ENCODE measurements at regions of chr3 and their contacts with region 1.

Region 1: DNA sequence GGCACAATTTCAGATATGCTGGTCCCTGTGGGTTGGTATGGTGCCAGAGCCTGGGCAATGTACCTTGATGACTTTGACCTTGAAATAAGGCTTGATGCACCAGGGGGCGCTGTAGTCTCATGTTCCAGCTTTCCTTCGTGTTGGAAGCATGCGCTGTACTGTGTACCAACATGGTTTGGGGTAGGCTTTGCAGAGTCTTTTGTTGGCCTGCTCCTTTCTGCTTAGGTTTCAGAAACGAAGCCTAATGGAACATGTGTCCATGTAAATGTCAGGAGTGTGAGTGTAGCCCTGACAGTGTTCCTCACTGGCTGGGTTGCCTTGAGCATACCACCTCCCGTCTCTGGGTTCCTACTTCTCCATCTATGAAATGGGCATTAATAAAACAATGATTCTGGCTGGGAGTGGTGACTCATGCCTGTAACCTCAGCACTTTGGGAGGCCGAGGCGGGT is 3.6 kb upstream of the CCR4 start:
- DNase-seq: peak; percentile 82 to 89 (median 85)
- H3K4me3 ChIP-seq: no peak overlapping the region
- H3K4me3 Mint-ChIP-seq: peak overlapping the region in 2 of 8 donors; percentile 7 to 52
- H3K27ac ChIP-seq: no peak overlapping the region
- H3K27ac Mint-ChIP-seq: peak overlapping the region in 6 of 7 donors; percentile 5 to 91 (median 62)
- H3K4me1 ChIP-seq: peaks cover 42% of the 10 kb centered on the region
- H3K4me1 Mint-ChIP-seq: peaks cover 20 to 52% (median 37%) of the 10 kb centered on the region in 4 donors
- H3K27me3 ChIP-seq: no peaks in the 10 kb centered on the region
- H3K27me3 Mint-ChIP-seq: no peaks in the 10 kb centered on the region

Region 2: DNA sequence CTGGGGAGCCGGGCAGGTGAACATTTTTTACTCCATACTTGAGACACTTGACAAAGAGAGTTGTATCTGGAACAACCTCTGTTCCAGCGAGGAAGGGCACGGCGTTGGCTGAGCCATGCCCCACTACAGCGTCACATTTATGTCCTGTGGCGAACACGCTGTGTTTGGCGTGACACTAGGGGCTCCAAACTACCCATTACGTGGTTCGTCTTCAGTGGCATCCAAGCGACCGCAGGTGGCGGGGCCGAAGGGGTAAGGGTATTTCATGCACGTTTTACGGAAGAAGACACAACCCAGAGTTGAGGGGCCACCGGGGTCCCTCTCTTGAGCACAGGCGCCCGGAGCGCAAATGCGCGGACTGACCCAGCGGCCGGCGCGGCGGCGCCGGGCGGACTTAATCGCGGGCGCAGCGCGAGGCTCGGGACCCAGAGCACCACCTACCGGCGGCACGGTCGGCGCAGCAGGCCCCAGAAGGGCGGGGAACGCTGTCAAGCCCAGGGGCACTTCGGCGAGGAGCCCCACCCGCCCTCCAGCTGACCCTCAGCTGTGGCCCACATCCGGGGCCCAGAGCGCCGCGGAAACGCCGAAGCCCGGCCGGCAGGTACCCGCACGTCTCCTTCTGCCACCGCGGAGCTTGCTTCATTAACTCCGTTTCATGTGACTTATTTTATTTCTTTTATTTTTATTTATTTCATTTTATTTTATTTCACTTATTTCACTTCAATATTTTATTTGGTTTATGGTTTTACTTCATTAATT is 166.4 kb before region 1 on chr3:
- CTCF ChIA-PET with region 1: no interaction called
- POLR2A ChIA-PET with region 1: no interaction called
- intact Hi-C with region 1: no loop called
- DNase-seq: peak; percentile 35 to 52 (median 42)
- H3K4me3 ChIP-seq: peak overlapping the region; percentile 60 to 84
- H3K4me3 Mint-ChIP-seq: peak overlapping the region; percentile 87 to 95 (median 90)
- H3K27ac ChIP-seq: no peak overlapping the region
- H3K27ac Mint-ChIP-seq: peak overlapping the region in 3 of 7 donors; percentile 42 to 63 (median 59)
- H3K4me1 ChIP-seq: peaks cover 6% of the 10 kb centered on the region
- H3K4me1 Mint-ChIP-seq: peaks cover 2 to 13% (median 4%) of the 10 kb centered on the region in 4 donors
- H3K27me3 ChIP-seq: peaks cover 3% of the 10 kb centered on the region
- H3K27me3 Mint-ChIP-seq: peaks cover 3 to 4% of the 10 kb centered on the region in 2 donors

Region 3: DNA sequence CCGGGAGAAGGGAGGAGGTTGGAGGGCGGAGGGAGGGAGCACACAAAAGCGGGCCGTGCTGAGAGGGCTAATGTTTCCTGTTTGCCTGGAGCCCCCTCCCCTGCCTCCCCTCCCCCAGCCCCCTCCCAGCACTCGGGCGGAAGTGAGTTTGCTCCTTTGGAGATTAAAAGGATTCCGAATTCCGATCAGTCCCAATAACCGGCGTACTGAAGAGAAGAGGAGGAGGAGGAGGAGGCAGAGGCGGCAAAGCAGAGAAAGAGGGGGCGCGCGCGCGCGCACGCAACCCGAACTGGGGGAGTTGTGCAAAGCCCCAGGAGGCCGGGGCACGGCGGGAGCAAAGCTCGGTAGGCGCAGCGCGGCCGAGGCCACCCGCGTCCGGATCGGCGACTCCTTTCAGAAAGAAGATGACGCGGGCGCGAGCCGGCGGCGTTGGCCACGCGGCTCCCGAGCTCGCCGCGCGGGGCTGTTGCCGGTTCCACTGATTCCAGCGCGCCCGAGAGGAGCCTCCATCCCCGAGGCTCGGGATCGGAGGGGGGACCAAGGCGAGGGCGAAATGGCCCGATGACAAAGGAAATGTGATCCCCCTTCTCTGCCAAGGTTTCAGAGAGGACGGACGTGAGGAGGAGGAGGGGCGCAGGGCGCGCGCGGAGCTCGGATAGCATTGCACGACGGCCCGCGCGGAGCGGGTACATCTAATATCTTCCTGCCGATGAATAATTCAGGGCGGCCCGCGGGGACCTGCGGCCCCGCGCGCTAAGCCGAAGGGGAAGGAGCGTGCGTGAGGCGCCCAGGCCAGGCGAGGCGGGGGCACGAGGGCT is 131.2 kb before region 1 on chr3:
- CTCF ChIA-PET with region 1: no interaction called
- POLR2A ChIA-PET with region 1: no interaction called
- intact Hi-C with region 1: no loop called
- DNase-seq: peak in 1 of 5 donors; percentile 9
- H3K4me3 ChIP-seq: peak overlapping the region in 1 of 2 donors; percentile 19
- H3K4me3 Mint-ChIP-seq: peak overlapping the region; percentile 51 to 80 (median 64)
- H3K27ac ChIP-seq: no peak overlapping the region
- H3K27ac Mint-ChIP-seq: no peak overlapping the region
- H3K4me1 ChIP-seq: peaks cover 5% of the 10 kb centered on the region
- H3K4me1 Mint-ChIP-seq: peaks cover 6 to 30% (median 22%) of the 10 kb centered on the region in 4 donors
- H3K27me3 ChIP-seq: no peaks in the 10 kb centered on the region
- H3K27me3 Mint-ChIP-seq: peaks cover 26 to 33% of the 10 kb centered on the region in 2 donors

Region 4: GRCh38 chr3:32856355-32856889 is 91.4 kb before region 1 on chr3:
- CTCF ChIA-PET with region 1: no interaction called
- POLR2A ChIA-PET with region 1: no interaction called
- intact Hi-C with region 1: no loop called
- DNase-seq: no peak
- H3K4me3 ChIP-seq: no peak overlapping the region
- H3K4me3 Mint-ChIP-seq: no peak overlapping the region
- H3K27ac ChIP-seq: no peak overlapping the region
- H3K27ac Mint-ChIP-seq: no peak overlapping the region
- H3K4me1 ChIP-seq: no peaks in the 10 kb centered on the region
- H3K4me1 Mint-ChIP-seq: no peaks in the 10 kb centered on the region
- H3K27me3 ChIP-seq: no peaks in the 10 kb centered on the region
- H3K27me3 Mint-ChIP-seq: peaks cover 3 to 8% of the 10 kb centered on the region in 2 donors

Region 5: GRCh38 chr3:32960404-32961170 is 12.8 kb after region 1 on chr3:
- CTCF ChIA-PET with region 1: interaction called, 15 read pairs
- POLR2A ChIA-PET with region 1: interaction called, 5 read pairs
- intact Hi-C with region 1: loop called (anchors 1 kb)
- DNase-seq: peak; percentile 45 to 66 (median 55)
- H3K4me3 ChIP-seq: no peak overlapping the region
- H3K4me3 Mint-ChIP-seq: peak overlapping the region in 7 of 8 donors; percentile 18 to 75 (median 64)
- H3K27ac ChIP-seq: peak overlapping the region; percentile 31
- H3K27ac Mint-ChIP-seq: peak overlapping the region; percentile 63 to 99 (median 92)
- H3K4me1 ChIP-seq: peaks cover 71% of the 10 kb centered on the region
- H3K4me1 Mint-ChIP-seq: peaks cover 35 to 66% (median 56%) of the 10 kb centered on the region in 4 donors
- H3K27me3 ChIP-seq: no peaks in the 10 kb centered on the region
- H3K27me3 Mint-ChIP-seq: no peaks in the 10 kb centered on the region

Region 6: DNA sequence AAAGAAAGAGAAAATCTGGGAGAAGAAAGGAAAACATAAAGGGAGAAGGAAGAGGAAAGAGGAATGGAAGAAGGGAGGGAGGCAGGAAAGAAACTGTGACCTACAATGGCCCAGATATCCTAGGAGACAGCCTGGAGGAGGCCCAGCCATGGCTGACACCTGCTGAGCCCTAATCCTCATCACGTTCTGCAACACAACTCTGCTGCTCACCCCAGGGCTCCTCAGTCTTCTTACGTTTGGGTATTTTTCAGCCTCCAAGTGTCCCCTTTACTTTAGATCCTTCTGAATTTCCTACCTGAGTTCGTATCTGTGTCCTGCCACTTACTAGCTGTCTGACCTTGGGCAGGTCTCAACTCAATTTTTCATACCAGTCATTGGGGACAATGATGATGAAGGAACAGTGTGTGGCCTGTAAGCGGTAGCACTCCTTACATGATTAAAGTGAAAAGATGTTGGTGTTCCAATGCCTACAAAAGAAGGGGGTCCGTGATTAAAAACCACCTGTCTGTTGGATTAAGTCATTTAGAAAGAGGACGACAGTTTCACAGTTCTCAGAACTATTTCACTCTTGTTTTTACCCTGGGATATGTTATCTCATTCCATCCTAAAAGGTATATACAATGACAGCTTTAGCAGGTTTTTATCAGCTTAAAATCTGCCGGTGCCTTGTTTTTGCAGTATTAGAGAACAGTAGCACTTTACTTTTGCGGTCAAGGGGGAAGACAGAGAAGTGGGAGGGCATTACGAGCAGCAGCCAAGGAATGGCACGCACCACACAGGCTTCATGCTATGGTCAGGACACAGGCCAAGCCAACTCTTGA is 51.0 kb after region 1 on chr3:
- CTCF ChIA-PET with region 1: interaction called, 17 read pairs
- POLR2A ChIA-PET with region 1: interaction called, 47 read pairs
- intact Hi-C with region 1: no loop called
- DNase-seq: peak in 1 of 5 donors; percentile 47
- H3K4me3 ChIP-seq: peak overlapping the region in 1 of 2 donors; percentile 6
- H3K4me3 Mint-ChIP-seq: peak overlapping the region in 7 of 8 donors; percentile 29 to 80 (median 61)
- H3K27ac ChIP-seq: peak overlapping the region; percentile 23
- H3K27ac Mint-ChIP-seq: peak overlapping the region; percentile 86 to 98 (median 93)
- H3K4me1 ChIP-seq: peaks cover 85% of the 10 kb centered on the region
- H3K4me1 Mint-ChIP-seq: peaks cover 54 to 93% (median 82%) of the 10 kb centered on the region in 4 donors
- H3K27me3 ChIP-seq: no peaks in the 10 kb centered on the region
- H3K27me3 Mint-ChIP-seq: no peaks in the 10 kb centered on the region

Region 7: DNA sequence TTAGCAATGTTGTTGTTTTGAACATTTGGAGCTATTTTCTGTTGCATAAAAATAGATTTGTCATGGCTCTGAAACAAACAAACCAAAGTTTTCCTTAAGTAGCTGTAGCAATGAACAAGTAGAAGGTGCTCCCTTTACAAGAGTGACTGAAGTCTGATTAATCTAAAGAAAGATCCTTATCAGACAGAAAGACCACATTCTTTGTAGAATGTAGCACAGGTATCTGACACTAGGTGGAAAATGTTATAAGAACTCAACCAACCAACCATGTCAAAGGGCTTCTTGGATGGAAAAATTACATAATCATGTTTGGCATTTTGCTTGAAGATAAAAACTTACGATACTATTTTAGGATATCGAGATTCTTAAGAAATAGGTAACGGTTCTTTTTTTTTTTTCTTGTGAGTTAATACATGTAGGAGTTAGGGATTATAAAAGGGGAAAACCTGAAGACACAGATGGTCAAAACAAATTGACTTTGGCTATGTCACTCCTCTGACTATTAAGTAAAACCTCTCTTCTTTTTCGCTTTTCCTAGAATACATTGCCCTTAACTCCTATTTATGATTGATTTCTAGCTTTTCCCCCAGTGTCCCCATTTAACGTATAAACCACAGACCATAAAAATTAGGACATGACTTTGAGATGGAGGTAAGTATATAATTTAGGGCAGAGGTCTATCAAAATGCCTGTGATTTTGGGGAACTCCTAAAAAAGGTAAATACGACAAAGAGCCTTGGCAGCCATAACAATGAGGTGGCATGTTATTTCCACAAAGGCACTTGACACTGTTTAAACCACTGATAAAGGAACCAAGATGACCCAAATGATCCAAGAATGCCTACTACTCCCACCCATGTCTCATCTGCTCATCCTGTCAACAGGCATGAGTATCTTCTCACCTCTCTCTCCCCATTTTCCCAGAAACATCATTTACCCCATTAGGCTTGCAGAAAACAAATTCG is 75.6 kb after region 1 on chr3:
- CTCF ChIA-PET with region 1: interaction called, 93 read pairs
- POLR2A ChIA-PET with region 1: interaction called, 13 read pairs
- intact Hi-C with region 1: loop called (anchors 2 kb)
- DNase-seq: peak in 4 of 5 donors; percentile 50 to 71 (median 58)
- H3K4me3 ChIP-seq: no peak overlapping the region
- H3K4me3 Mint-ChIP-seq: peak overlapping the region; percentile 10 to 81 (median 70)
- H3K27ac ChIP-seq: peak overlapping the region; percentile 34
- H3K27ac Mint-ChIP-seq: peak overlapping the region; percentile 87 to 96 (median 92)
- H3K4me1 ChIP-seq: peaks cover 62% of the 10 kb centered on the region
- H3K4me1 Mint-ChIP-seq: peaks cover 48 to 76% (median 58%) of the 10 kb centered on the region in 4 donors
- H3K27me3 ChIP-seq: no peaks in the 10 kb centered on the region
- H3K27me3 Mint-ChIP-seq: no peaks in the 10 kb centered on the region

Region 8: GRCh38 chr3:33063651-33064051 is 115.8 kb after region 1 on chr3:
- CTCF ChIA-PET with region 1: interaction called, 402 read pairs
- POLR2A ChIA-PET with region 1: interaction called, 60 read pairs
- intact Hi-C with region 1: loop called (anchors 1 kb)
- DNase-seq: peak; percentile 48 to 84 (median 49)
- H3K4me3 ChIP-seq: no peak overlapping the region
- H3K4me3 Mint-ChIP-seq: peak overlapping the region; percentile 7 to 86 (median 78)
- H3K27ac ChIP-seq: peak overlapping the region; percentile 71
- H3K27ac Mint-ChIP-seq: peak overlapping the region; percentile 89 to 100 (median 99)
- H3K4me1 ChIP-seq: peaks cover 83% of the 10 kb centered on the region
- H3K4me1 Mint-ChIP-seq: peaks cover 60 to 91% (median 73%) of the 10 kb centered on the region in 4 donors
- H3K27me3 ChIP-seq: no peaks in the 10 kb centered on the region
- H3K27me3 Mint-ChIP-seq: no peaks in the 10 kb centered on the region

Region 9: DNA sequence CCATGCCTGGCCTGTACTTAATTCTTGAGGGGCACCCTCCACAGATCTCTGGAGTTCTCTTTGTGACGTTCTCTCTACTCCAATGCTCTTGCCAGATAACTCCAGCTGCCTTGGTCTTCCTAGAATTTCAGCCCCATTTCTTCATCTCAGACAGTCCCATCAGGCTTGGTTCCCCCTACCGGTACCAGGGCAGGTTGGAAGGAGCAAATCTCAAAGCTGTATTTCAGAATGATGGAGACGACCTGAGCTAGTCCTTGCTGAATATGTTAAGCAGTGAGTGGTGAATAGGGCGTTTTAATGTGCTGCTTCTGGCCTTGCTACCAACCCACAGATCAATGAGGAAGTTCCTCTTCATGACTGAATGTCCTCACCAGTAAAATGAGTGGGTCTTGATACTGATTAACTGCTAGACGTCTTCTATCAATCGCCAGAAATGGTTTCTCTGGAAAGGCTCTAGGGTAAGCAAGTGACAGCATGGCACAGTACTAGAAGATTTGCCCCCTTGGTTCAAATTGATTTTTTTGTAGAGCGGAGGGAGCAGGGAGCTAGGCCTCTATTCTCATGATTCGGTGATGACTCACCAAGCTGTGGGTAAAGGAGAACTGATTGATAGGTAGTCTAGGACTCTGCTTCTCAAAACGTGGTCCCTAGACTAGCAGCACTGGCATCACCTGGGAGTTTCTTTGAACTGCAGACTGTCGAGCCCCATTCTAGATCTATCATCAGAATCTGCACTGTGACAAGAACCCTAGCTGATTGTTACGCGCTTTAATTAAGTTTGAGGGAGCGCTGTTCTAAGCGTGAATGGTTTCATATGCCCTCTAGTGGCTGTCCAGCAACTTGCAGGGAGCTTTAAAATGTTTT is 424.6 kb after region 1 on chr3:
- CTCF ChIA-PET with region 1: interaction called, 44 read pairs
- POLR2A ChIA-PET with region 1: interaction called, 9 read pairs
- intact Hi-C with region 1: no loop called
- DNase-seq: peak; percentile 39 to 57 (median 49)
- H3K4me3 ChIP-seq: no peak overlapping the region
- H3K4me3 Mint-ChIP-seq: peak overlapping the region in 1 of 8 donors; percentile 7
- H3K27ac ChIP-seq: no peak overlapping the region
- H3K27ac Mint-ChIP-seq: peak overlapping the region in 1 of 7 donors; percentile 51
- H3K4me1 ChIP-seq: no peaks in the 10 kb centered on the region
- H3K4me1 Mint-ChIP-seq: peaks cover 2 to 7% (median 5%) of the 10 kb centered on the region in 4 donors
- H3K27me3 ChIP-seq: no peaks in the 10 kb centered on the region
- H3K27me3 Mint-ChIP-seq: peaks cover 11 to 12% of the 10 kb centered on the region in 2 donors